ENCODE measurements at regions of chr4 and their contacts with region 1.

Region 1: DNA sequence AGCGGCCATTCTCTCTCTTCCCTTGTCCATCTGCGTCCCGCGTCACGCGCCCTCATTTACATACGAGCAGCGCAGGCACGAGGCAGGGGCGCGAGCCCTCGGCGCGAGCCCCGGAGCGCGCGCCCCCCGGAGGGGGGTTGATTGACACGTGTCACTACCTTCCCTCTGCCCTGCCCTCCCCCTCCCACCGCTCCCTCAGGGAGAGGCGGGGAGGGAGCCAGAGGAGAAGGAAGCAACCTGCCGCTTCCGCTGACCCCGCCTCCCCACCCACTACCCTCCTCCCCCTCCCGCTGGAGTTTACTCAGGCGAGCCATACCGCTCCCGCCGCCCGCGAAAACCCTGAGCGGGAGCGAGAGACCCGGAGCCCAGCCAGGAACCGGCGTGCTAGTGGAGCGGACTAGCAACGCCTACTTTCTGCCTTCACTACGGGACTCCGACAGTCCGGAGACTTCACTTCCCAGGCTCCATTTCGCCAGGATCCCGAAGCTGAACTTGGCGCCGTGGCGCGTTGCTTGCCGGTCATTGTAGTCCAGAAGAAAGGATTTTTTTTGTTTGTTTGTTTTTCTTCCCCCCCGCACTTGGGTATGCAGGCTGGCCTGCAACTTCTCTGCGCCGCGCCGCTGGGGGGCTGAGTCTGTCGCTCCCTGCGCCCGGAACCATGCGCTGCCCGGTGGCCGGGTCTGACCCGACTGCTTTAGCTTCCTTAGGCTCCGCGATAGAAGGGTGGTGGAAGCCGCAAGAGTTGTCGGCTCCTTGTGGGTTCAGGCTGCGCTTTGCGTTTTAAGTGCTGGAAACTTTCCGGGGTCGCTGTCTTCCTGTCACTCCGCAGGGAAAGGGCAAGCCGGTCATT is at the start of gene LCORL:
- DNase-seq: peak; percentile 89
- H3K4me3 Mint-ChIP-seq: peak within 1 kb of the TSS; percentile 98
- H3K27ac Mint-ChIP-seq: peak within 1 kb of the TSS; percentile 79
- H3K4me1 Mint-ChIP-seq: peaks cover 14% of the 10 kb centered on the region
- H3K27me3 Mint-ChIP-seq: peaks cover 16% of the 10 kb centered on the region
- total RNA-seq, gene LCORL: 8.6 to 9.4 TPM

Region 2: GRCh38 chr4:17414392-17414791 is 607.6 kb before region 1 on chr4:
- CTCF ChIA-PET with region 1: no interaction called
- intact Hi-C with region 1: no loop called
- DNase-seq: no peak
- H3K4me3 Mint-ChIP-seq: no peak overlapping the region
- H3K27ac Mint-ChIP-seq: no peak overlapping the region
- H3K4me1 Mint-ChIP-seq: no peaks in the 10 kb centered on the region
- H3K27me3 Mint-ChIP-seq: peaks cover 12% of the 10 kb centered on the region

Region 3: DNA sequence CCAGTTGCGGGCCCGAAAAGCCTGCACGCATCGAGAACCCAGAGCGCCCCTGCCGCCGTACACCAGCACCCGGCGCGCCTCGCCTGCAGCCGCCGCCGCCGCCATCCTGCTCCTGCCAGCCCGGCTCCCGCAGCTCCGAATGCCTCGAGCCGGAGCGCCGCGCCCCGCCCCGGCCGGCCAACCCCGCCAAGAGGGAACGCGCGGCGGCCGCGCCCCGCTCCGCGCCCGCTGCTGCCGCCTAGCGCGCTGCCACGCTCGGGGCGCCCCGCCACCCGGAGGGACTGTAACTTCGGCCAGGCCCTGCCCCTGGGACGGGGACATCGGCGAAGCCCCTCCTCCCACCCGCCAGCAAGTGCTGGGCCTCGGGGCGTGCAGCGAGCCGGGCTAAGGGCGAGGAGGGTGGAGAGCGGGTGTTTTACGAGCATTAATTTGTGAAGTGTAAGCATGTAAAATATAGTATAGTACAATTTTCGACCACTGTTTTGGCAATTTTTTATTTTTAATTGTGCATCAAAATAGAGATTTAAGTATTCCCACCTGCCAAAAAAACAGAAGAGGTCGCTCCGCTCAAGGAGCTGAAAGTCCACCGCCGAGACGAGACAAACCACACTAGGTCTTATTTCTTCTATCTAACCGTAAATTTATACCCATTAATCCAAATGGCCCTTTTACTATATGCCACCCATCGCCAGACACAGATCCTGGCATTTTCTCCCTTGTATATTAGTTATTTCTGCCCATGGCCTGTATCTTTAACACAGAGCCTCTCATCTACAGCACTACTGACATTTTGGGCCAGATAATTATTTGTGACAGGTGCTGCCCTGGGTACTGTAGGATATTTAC is 509.8 kb before region 1 on chr4 and contains the start of gene QDPR:
- CTCF ChIA-PET with region 1: no interaction called
- intact Hi-C with region 1: loop called (anchors 1 kb)
- DNase-seq: peak; percentile 76
- H3K4me3 Mint-ChIP-seq: peak within 1 kb of the TSS; percentile 89
- H3K27ac Mint-ChIP-seq: peak within 1 kb of the TSS; percentile 63
- H3K4me1 Mint-ChIP-seq: peaks cover 21% of the 10 kb centered on the region
- H3K27me3 Mint-ChIP-seq: no peaks in the 10 kb centered on the region
- total RNA-seq, gene QDPR: 42.2 to 43.8 TPM

Region 4: DNA sequence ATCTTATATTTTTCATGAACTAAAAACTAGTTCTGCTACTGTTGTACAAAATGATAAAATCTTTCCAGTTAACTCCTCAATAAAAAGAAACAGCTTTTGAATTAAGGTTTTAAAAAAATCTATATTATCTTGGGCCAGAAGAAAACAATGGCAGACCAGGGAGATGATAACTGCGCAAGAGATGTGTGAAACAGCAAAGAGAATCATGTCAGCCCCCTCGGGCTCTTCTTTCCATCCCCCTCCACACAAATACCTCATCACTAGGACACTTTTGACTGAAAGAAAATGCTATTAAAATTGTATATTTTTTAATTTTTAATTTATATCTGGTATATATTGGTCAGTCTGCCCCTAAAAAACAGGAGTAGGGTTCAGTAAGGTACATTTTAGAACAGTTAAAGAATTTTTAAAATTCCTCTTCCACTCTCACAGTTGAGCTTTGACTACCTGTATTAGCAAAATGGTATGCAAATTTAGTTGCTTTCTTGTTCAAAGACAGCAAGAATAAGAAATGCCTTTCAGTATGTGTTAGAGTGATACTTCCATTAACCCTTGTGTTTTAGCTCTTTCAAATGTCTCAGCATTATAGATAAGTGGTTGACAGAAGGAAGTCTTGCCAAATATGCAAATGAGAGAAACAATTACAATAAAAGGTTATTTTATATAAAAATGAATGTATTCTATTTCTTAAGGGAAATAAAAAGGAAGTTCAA is 36.0 kb after region 1 on chr4:
- CTCF ChIA-PET with region 1: no interaction called
- intact Hi-C with region 1: loop called (anchors 1 kb)
- DNase-seq: no peak
- H3K4me3 Mint-ChIP-seq: no peak overlapping the region
- H3K27ac Mint-ChIP-seq: no peak overlapping the region
- H3K4me1 Mint-ChIP-seq: peaks cover 11% of the 10 kb centered on the region
- H3K27me3 Mint-ChIP-seq: peaks cover 33% of the 10 kb centered on the region

Measured in activated naive CD4-positive, alpha-beta T cell treated with anti-CD3 and anti-CD28 coated beads for 36 hours (primary cell).